ENCODE measurements at regions of chr12 and their contacts with region 1.

Region 1: GRCh38 chr12:9094512-9095206 is 21.1 kb downstream of the A2M start:
- DNase-seq: no peak
- ATAC-seq: no peak
- H3K4me3 ChIP-seq: no peak overlapping the region
- H3K4me3 Mint-ChIP-seq: no peak overlapping the region
- H3K27ac ChIP-seq: no peak overlapping the region
- H3K27ac Mint-ChIP-seq: no peak overlapping the region
- H3K4me1 ChIP-seq: no peaks in the 10 kb centered on the region
- H3K4me1 Mint-ChIP-seq: no peaks in the 10 kb centered on the region
- H3K27me3 ChIP-seq: no peaks in the 10 kb centered on the region
- H3K27me3 Mint-ChIP-seq: no peaks in the 10 kb centered on the region

Region 2: GRCh38 chr12:7139200-7139599 is 1955.5 kb before region 1 on chr12:
- CTCF ChIA-PET with region 1: no interaction called
- POLR2A ChIA-PET with region 1: interaction called in 1 of 2 experiments, 19 read pairs
- DNase-seq: no peak
- ATAC-seq: no peak
- H3K4me3 ChIP-seq: no peak overlapping the region
- H3K4me3 Mint-ChIP-seq: no peak overlapping the region
- H3K27ac ChIP-seq: no peak overlapping the region
- H3K27ac Mint-ChIP-seq: no peak overlapping the region
- H3K4me1 ChIP-seq: no peaks in the 10 kb centered on the region
- H3K4me1 Mint-ChIP-seq: peaks cover 0 to 10% (median 2%) of the 10 kb centered on the region in 3 donors
- H3K27me3 ChIP-seq: no peaks in the 10 kb centered on the region
- H3K27me3 Mint-ChIP-seq: no peaks in the 10 kb centered on the region

Region 3: DNA sequence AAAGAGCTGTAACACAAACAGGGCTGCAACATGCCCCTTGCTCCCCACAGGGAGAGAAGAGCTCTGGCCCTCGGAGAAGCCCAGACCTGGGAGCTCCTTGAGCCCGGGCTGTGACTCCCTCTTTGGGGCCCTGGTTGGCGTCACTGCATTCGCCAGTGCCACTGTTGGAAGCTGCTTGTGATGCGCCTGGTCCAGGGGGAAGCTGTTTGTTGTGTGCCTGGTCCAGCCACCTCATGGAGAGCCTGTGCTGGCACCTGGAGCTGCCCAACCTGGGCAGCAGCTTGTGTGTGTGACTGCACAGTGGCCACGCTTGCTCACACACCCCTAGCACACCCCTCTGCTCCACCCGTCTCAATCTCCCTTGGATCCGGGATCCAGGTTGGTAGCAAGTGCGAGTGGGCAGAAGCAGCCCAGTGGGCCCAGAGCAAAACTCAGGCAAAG is 28.5 kb before region 1 on chr12:
- CTCF ChIA-PET with region 1: no interaction called
- POLR2A ChIA-PET with region 1: no interaction called
- DNase-seq: no peak
- ATAC-seq: no peak
- H3K4me3 ChIP-seq: no peak overlapping the region
- H3K4me3 Mint-ChIP-seq: peak overlapping the region; percentile 37 to 62 (median 54)
- H3K27ac ChIP-seq: no peak overlapping the region
- H3K27ac Mint-ChIP-seq: no peak overlapping the region
- H3K4me1 ChIP-seq: peaks cover 2 to 17% of the 10 kb centered on the region in 2 experiments
- H3K4me1 Mint-ChIP-seq: peaks cover 7 to 12% (median 9%) of the 10 kb centered on the region in 3 donors
- H3K27me3 ChIP-seq: peaks cover 0 to 9% of the 10 kb centered on the region in 2 experiments
- H3K27me3 Mint-ChIP-seq: no peaks in the 10 kb centered on the region

Region 4: GRCh38 chr12:9134981-9135628 is 40.4 kb after region 1 on chr12:
- CTCF ChIA-PET with region 1: no interaction called
- POLR2A ChIA-PET with region 1: no interaction called
- DNase-seq: no peak
- ATAC-seq: no peak
- H3K4me3 ChIP-seq: no peak overlapping the region
- H3K4me3 Mint-ChIP-seq: no peak overlapping the region
- H3K27ac ChIP-seq: no peak overlapping the region
- H3K27ac Mint-ChIP-seq: no peak overlapping the region
- H3K4me1 ChIP-seq: no peaks in the 10 kb centered on the region
- H3K4me1 Mint-ChIP-seq: peaks cover 0 to 19% (median 11%) of the 10 kb centered on the region in 3 donors
- H3K27me3 ChIP-seq: no peaks in the 10 kb centered on the region
- H3K27me3 Mint-ChIP-seq: no peaks in the 10 kb centered on the region

Measured in T-cell (primary cell).